Heart right ventricle (tissue), 16 donors: ENCODE measurements at regions of chr12 and their contacts with region 1.

Region 1: DNA sequence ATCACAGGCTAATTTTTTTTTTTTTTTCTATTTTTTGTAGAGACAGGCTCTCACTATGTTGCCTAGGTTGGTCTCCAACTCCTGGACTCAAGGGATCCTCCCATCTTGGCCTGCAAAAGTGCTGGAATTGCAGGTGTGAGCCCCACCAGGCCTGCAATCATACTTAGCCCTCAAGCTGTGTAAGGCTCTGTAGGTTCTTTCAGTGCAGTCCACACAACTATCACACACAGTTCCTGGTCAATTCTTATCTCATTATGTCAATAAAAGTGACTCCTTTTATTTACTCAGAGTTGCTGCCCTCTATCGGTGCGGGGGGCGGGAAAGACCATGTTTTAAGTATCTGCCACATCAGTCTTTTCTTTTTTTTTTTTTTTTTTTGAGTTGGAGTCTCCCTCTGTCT is 29.0 kb downstream of the SLC2A3 start:
- DNase-seq: peak in 1 of 2 donors; percentile 17
- ATAC-seq: peak in 1 of 8 donors; percentile 27
- H3K4me3 ChIP-seq: no peak overlapping the region
- H3K27ac ChIP-seq: no peak overlapping the region
- H3K4me1 ChIP-seq: peaks cover 0 to 6% (median 0%) of the 10 kb centered on the region in 9 donors
- H3K27me3 ChIP-seq: no peaks in the 10 kb centered on the region
- CTCF ChIP-seq: peak in 4 of 9 donors; percentile 13 to 27 (median 21)

Region 2: DNA sequence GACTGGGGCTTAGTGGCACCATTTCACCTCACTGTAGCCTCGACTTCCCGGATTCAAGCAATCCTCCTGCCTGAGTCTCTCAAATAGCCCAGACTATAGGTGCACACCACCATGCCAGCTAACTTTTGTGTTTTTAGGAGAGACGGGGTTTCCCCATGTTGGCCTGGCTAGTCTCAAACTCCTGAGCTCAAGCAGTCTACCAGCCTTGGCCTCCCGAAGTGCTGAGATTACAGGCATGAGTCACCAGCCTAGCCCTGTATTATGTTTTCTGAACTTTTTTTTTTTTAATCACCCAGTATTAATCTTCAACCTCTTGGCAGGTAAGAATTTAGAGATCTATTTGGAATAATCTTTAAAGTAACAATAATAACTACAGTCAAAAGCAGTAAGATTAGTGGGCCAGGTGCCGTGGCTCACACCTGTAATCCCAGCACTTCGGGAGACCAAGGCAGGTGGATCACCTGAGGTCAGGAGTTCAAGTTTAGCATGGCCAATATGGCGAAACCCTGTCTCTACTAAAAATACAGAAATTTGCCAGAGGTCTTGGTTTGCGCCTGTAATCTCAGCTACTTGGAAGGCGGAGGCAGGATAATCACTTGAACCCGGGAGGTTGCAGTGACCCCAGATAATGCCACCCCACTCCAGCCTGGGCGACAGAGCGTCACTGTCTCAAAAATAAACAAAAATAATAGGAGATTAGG is 109.2 kb before region 1 on chr12:
- intact Hi-C with region 1: loop called in 2 of 10 experiments (anchors 2 to 5 kb)
- DNase-seq: no peak
- ATAC-seq: no peak
- H3K4me3 ChIP-seq: no peak overlapping the region
- H3K27ac ChIP-seq: no peak overlapping the region
- H3K4me1 ChIP-seq: peaks cover 0 to 5% (median 0%) of the 10 kb centered on the region in 9 donors
- H3K27me3 ChIP-seq: peaks cover 0 to 4% (median 0%) of the 10 kb centered on the region in 7 donors
- CTCF ChIP-seq: no peak

Region 3: GRCh38 chr12:7859552-7859951 is 47.5 kb before region 1 on chr12:
- intact Hi-C with region 1: loop called in 2 of 10 experiments (anchors 2 to 5 kb)
- DNase-seq: no peak
- ATAC-seq: no peak
- H3K4me3 ChIP-seq: no peak overlapping the region
- H3K27ac ChIP-seq: no peak overlapping the region
- H3K4me1 ChIP-seq: peaks cover 0 to 14% (median 3%) of the 10 kb centered on the region in 9 donors
- H3K27me3 ChIP-seq: peaks cover 0 to 38% (median 11%) of the 10 kb centered on the region in 7 donors
- CTCF ChIP-seq: no peak